Mammary epithelial cell (primary cell): ENCODE measurements at regions of chr2 and their contacts with region 1.

Region 1: GRCh38 chr2:29583544-29584156 is 337.7 kb downstream of the ALK start:
- DNase-seq: no peak
- H3K4me3 ChIP-seq: no peak overlapping the region
- H3K27ac ChIP-seq: no peak overlapping the region
- H3K4me1 ChIP-seq: peaks cover 11% of the 10 kb centered on the region
- H3K27me3 ChIP-seq: no peaks in the 10 kb centered on the region
- CTCF ChIP-seq: no peak

Region 2: DNA sequence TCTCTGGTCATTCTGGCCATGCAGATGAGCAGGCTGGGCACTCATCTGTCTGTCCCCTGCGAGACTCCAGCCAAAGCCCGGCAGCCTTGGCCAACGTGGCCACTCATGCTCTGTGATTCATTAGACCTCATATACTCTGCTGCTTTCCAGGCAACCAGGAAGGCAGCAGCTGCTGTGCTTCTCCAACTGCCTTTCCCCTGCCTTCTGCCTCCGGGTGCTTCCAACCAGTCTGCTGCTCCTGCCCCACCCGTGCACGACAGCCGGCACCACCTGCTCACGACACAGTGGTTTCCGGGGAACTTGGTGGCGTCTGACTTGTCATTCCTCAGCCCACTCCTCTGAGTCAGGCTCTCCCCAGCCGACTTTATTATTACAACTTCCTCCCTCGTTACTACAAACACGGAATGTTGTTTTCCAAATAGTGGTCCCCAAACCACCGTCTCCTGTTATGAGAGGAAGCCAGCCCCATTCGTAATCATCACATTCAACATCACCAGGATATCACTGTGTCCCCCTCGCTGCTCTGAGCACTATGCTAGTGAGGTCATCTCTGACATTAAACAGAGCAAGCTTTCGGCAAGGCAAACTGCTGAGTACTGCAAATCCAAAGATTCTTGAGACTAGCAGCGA is 54.6 kb before region 1 on chr2:
- CTCF ChIA-PET with region 1: no interaction called
- dilution Hi-C with region 1: no loop called
- in situ Hi-C with region 1: no loop called
- intact Hi-C with region 1: no loop called
- DNase-seq: no peak
- H3K4me3 ChIP-seq: no peak overlapping the region
- H3K27ac ChIP-seq: no peak overlapping the region
- H3K4me1 ChIP-seq: no peaks in the 10 kb centered on the region
- H3K27me3 ChIP-seq: no peaks in the 10 kb centered on the region
- CTCF ChIP-seq: no peak

Region 3: GRCh38 chr2:29663268-29663667 is 79.6 kb after region 1 on chr2:
- CTCF ChIA-PET with region 1: interaction called, 17 read pairs
- dilution Hi-C with region 1: no loop called
- in situ Hi-C with region 1: no loop called
- intact Hi-C with region 1: no loop called
- DNase-seq: peak; percentile 73
- H3K4me3 ChIP-seq: no peak overlapping the region
- H3K27ac ChIP-seq: peak overlapping the region; percentile 60
- H3K4me1 ChIP-seq: peaks cover 20% of the 10 kb centered on the region
- H3K27me3 ChIP-seq: no peaks in the 10 kb centered on the region
- CTCF ChIP-seq: no peak